Activated CD4-positive, alpha-beta T cell treated with anti-CD3 and anti-CD28 coated beads for 36 hours (primary cell): ENCODE measurements at regions of chr17 and their contacts with region 1.

Region 1: DNA sequence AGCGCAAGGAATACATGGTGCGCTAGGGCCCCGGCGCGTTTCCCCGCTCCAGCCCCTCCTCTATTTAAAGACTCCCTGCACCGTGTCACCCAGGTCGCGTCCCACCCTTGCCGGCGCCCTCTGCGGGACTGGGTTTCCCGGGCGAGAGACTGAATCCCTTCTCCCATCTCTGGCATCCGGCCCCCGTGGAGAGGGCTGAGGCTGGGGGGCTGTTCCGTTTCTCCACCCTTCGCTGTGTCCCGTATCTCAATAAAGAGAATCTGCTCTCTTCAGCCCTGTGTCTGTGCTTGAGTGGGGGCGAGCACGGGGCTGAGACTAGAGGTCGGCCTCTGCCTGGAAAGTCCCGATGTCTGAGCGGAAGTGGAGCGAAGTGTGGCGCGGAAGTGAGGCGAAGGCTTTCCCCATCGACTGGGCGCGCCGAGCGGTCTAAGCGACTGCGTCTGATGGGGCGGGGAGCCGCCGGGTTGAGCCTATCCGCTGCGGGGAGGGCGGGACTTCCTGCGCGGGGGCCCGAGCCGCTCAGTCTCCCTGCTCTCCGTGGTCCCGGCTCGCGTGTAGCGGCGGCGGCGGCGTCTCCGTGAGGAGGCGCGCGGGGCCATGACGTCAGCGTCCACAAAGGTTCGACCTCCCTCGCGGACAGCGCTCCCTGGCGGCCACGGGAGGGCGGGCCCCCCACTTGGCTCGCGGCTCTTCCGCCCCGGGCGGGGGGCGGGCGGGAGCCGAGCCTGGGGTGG is 2.0 kb downstream of the RNASEK start:
- DNase-seq: peak; percentile 99
- ATAC-seq: peak; percentile 88
- H3K4me3 Mint-ChIP-seq: peak overlapping the region; percentile 92
- H3K27ac Mint-ChIP-seq: peak overlapping the region; percentile 99
- H3K4me1 Mint-ChIP-seq: peaks cover 54% of the 10 kb centered on the region
- H3K27me3 Mint-ChIP-seq: no peaks in the 10 kb centered on the region

Region 2: GRCh38 chr17:6443692-6444569 is 570.5 kb before region 1 on chr17 and contains the start of gene PIMREG:
- CTCF ChIA-PET with region 1: no interaction called
- POLR2A ChIA-PET with region 1: no interaction called
- intact Hi-C with region 1: loop called in 1 of 2 experiments (anchors 1 kb)
- DNase-seq: peak; percentile 97
- ATAC-seq: peak; percentile 98
- H3K4me3 Mint-ChIP-seq: peak within 1 kb of the TSS; percentile 77
- H3K27ac Mint-ChIP-seq: peak within 1 kb of the TSS; percentile 90
- H3K4me1 Mint-ChIP-seq: peaks cover 12% of the 10 kb centered on the region
- H3K27me3 Mint-ChIP-seq: peaks cover 7% of the 10 kb centered on the region
- total RNA-seq, gene PIMREG: 8.4 to 10.0 TPM

Region 3: DNA sequence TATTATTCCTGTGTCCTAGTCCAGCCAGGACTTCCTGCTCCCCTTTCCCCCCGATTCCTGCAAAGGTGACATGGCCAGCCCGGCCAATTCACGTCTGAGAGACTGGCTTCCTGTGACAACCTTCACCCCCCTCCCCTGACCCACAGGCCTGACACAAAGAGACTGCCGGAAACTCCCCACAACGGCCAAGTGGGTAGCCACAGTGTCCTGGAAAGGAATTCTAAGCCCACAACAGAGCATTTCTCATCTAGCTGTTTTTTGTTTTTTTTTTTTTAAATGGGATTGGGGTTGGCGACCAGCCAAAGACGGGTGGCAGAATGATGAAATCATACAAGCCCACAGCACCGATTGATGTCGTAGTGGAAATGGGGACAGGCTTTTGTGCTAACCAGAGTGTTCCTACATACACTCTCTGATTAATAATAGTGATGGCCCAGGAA is 261.4 kb before region 1 on chr17:
- CTCF ChIA-PET with region 1: no interaction called
- POLR2A ChIA-PET with region 1: no interaction called
- intact Hi-C with region 1: loop called in 1 of 2 experiments (anchors 5 kb)
- DNase-seq: peak; percentile 69
- ATAC-seq: peak; percentile 25
- H3K4me3 Mint-ChIP-seq: peak overlapping the region; percentile 3
- H3K27ac Mint-ChIP-seq: peak overlapping the region; percentile 91
- H3K4me1 Mint-ChIP-seq: peaks cover 48% of the 10 kb centered on the region
- H3K27me3 Mint-ChIP-seq: no peaks in the 10 kb centered on the region

Region 4: DNA sequence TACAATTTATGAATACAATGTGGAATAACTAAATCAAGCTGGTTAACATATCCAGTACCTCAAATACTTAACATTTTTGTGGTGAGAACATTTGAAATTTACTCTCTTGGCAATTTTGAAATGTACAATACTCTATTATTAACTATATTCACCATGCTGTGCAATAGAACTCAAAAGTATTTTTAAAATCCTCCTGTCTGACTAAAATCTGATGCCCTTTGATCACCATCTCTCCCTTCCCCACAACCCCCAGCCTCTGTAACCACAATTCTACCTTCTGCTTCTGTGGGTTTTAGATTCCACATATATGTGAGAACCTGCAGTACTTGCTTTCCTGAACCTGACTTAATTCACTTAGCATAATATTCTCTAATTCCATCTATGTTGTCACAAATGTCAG is 90.2 kb before region 1 on chr17:
- CTCF ChIA-PET with region 1: no interaction called
- POLR2A ChIA-PET with region 1: no interaction called
- intact Hi-C with region 1: no loop called
- DNase-seq: no peak
- ATAC-seq: peak; percentile 44
- H3K4me3 Mint-ChIP-seq: no peak overlapping the region
- H3K27ac Mint-ChIP-seq: no peak overlapping the region
- H3K4me1 Mint-ChIP-seq: peaks cover 24% of the 10 kb centered on the region
- H3K27me3 Mint-ChIP-seq: peaks cover 2% of the 10 kb centered on the region

Region 5: GRCh38 chr17:7035591-7036368 is 21.4 kb after region 1 on chr17 and contains the start of gene SLC16A13:
- CTCF ChIA-PET with region 1: interaction called, 3 read pairs
- POLR2A ChIA-PET with region 1: no interaction called
- intact Hi-C with region 1: loop called (anchors 1 kb)
- DNase-seq: peak; percentile 99
- ATAC-seq: peak; percentile 95
- H3K4me3 Mint-ChIP-seq: peak within 1 kb of the TSS; percentile 86
- H3K27ac Mint-ChIP-seq: peak within 1 kb of the TSS; percentile 96
- H3K4me1 Mint-ChIP-seq: peaks cover 45% of the 10 kb centered on the region
- H3K27me3 Mint-ChIP-seq: no peaks in the 10 kb centered on the region
- total RNA-seq, gene SLC16A13: 8.3 to 9.6 TPM

Region 6: GRCh38 chr17:7239091-7240027 is 224.9 kb after region 1 on chr17 and contains the start of gene PHF23:
- CTCF ChIA-PET with region 1: no interaction called
- POLR2A ChIA-PET with region 1: no interaction called
- intact Hi-C with region 1: loop called in 1 of 2 experiments (anchors 1 kb)
- DNase-seq: peak; percentile 99
- ATAC-seq: peak; percentile 74
- H3K4me3 Mint-ChIP-seq: peak within 1 kb of the TSS; percentile 97
- H3K27ac Mint-ChIP-seq: peak within 1 kb of the TSS; percentile 93
- H3K4me1 Mint-ChIP-seq: peaks cover 61% of the 10 kb centered on the region
- H3K27me3 Mint-ChIP-seq: no peaks in the 10 kb centered on the region
- total RNA-seq, gene PHF23: 23.6 to 35.2 TPM